Activated T-helper 1 cell treated with anti-CD3 and anti-CD28 coated beads, Interleukin-12 subunit alpha, Interleukin-12 subunit beta, Interleukin-2, Interleukin-4 antibody, amounts not matched to agents 30 ng/mL and 10 ng/mL and 1 ng/mL, durations not matched to agents 14 hours and 24 hours and 36 hours (primary cell): ENCODE measurements at regions of chr10 and their contacts with region 1.

Region 1: GRCh38 chr10:117162093-117163021 is 24.3 kb upstream of the VAX1 start:
- DNase-seq: no peak
- H3K4me3 Mint-ChIP-seq: no peak overlapping the region
- H3K27ac Mint-ChIP-seq: peak overlapping the region; percentile 79
- H3K4me1 Mint-ChIP-seq: peaks cover 8% of the 10 kb centered on the region
- H3K27me3 Mint-ChIP-seq: peaks cover 74% of the 10 kb centered on the region

Region 2: DNA sequence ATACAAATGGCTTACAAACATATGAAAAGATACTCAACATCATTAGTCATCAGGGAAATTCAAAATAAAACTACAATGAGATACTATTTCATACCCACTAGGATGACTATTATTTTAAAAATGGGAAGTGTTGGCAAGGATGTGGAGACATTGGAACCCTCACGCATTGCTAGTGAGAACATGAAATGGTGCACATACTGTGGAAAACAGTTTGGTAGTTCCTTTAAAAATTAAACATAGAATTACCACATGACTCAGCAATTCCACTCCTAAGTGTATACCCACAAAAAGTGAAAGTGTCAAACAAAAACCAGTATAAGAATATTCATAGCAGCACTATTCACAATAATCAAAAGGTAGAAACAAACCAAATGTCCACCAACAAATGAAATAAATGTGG is 108.9 kb before region 1 on chr10:
- intact Hi-C with region 1: no loop called
- DNase-seq: no peak
- H3K4me3 Mint-ChIP-seq: no peak overlapping the region
- H3K27ac Mint-ChIP-seq: no peak overlapping the region
- H3K4me1 Mint-ChIP-seq: no peaks in the 10 kb centered on the region
- H3K27me3 Mint-ChIP-seq: no peaks in the 10 kb centered on the region

Region 3: DNA sequence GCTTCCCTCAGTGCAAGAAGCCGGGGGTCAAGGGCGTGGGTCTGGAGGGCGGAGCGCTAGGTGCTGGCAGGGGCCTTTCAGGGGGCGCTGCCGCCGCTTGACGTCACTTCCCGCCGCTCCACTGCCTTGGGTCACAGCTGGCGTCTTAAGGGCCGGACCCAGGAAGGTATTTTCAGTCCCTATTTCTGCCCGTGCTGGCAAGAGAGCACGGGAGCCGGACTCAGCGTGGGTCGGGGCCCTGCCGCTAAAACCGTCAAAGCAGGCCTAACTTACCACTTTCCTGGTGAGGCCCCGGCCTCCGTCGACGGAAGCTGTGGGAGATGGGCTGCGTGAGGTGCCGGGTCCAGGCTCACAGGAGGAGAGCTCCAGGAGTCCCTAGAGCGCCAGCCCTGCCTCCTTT is 36.3 kb before region 1 on chr10:
- intact Hi-C with region 1: no loop called
- DNase-seq: no peak
- H3K4me3 Mint-ChIP-seq: no peak overlapping the region
- H3K27ac Mint-ChIP-seq: no peak overlapping the region
- H3K4me1 Mint-ChIP-seq: no peaks in the 10 kb centered on the region
- H3K27me3 Mint-ChIP-seq: peaks cover 28% of the 10 kb centered on the region

Region 4: DNA sequence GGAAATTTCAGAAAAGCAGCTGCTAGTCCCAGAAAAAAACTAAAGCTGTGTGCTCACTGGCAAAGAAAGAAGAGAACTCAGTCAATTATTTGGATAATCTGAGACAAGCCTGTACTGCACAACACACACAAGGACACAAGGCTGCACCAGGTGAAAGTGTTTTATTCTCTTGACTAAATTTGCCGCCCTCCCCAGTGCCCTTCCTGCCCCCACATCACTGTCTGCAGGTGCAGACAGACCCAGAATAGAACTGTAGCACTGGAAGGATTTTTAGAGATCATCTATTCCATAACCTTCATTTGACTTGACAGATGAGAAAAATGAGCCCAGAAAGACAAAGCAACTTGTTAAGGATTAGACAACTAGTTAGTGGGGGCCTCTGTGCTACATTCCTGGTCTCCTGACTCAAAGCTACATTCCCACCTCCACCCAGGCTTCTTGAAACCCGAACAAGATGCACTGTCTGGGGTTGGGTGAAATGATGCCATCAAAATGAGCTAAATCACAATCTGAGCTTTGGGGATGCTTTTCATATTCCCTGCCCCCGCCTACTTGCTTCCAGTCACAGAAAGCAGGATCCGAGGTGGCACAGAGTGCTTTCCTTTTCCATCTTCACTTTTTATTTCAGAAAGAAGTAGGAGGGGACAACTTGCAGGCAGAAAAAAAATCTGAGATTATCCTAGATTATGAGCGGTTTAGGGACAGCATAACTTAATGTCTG is 19.1 kb before region 1 on chr10:
- intact Hi-C with region 1: loop called (anchors 1 kb)
- DNase-seq: no peak
- H3K4me3 Mint-ChIP-seq: no peak overlapping the region
- H3K27ac Mint-ChIP-seq: no peak overlapping the region
- H3K4me1 Mint-ChIP-seq: no peaks in the 10 kb centered on the region
- H3K27me3 Mint-ChIP-seq: peaks cover 46% of the 10 kb centered on the region